K562 (cell line): ENCODE measurements at regions of chr3 and their contacts with region 1.

Region 1: DNA sequence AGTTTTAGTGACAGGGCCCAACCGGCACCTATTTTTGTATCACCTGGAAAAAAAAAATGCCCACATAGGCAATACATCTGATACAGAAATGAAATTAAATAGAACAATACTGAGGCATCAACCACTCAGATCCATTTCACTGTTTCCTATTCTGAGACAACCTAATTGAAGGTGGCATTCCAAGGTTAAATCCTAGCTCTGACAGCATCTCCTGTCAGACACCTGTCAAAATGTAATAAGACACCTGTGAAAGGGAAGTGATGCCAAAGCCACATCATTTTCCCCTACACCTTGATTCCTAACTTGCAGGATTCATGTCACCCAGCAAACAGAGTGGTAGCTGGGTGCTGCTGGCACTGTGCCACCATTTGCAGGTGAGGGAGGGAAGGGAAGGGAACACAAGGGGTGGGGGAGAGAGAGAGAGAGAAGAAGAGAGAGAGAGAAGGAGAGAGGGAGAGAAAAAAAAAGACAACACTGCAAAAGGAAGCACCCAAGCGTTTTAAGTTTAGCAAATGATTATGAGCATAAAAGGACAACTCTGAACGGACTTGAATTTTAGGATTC is 1044.6 kb upstream of the CFAP20DC start:
- DNase-seq: no peak
- ATAC-seq: no peak
- H3K4me3 ChIP-seq: no peak overlapping the region
- H3K27ac ChIP-seq: no peak overlapping the region
- H3K4me1 ChIP-seq: peaks cover 0 to 10% of the 10 kb centered on the region in 2 experiments; a peak in 3 of 5 replicates
- H3K27me3 ChIP-seq: no peaks in the 10 kb centered on the region
- CTCF ChIP-seq: no peak
- EP300 ChIP-seq: no peak
- POLR2A ChIP-seq: no peak
- RAD21 ChIP-seq: no peak

Region 2: DNA sequence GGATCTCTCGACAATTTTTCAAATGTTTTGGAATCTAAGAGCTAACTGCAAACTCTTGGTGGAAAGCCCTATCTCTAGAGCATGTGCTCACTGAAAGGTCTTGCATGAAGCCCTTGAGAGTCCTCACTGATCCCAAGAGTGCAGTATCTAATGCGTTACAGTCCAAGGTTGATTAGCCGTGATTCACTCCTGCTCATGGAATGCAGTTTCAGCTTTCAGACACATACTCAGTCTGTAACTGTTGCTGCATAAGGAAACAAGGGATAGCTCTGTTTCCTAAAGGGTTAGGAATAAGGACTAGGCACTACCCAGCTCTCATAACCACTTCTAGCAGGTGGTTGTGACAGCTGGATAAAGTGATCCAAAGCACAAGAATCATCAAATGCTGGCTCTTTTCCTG is 357.2 kb before region 1 on chr3:
- CTCF ChIA-PET with region 1: no interaction called
- POLR2A ChIA-PET with region 1: no interaction called
- in situ Hi-C with region 1: no loop called
- intact Hi-C with region 1: loop called (anchors 5 kb)
- DNase-seq: no peak
- ATAC-seq: no peak
- H3K4me3 ChIP-seq: no peak overlapping the region
- H3K27ac ChIP-seq: no peak overlapping the region
- H3K4me1 ChIP-seq: no peaks in the 10 kb centered on the region; a peak in 2 of 5 replicates
- H3K27me3 ChIP-seq: no peaks in the 10 kb centered on the region; a peak in 1 of 5 replicates
- CTCF ChIP-seq: no peak
- EP300 ChIP-seq: no peak
- POLR2A ChIP-seq: no peak
- RAD21 ChIP-seq: no peak

Region 3: DNA sequence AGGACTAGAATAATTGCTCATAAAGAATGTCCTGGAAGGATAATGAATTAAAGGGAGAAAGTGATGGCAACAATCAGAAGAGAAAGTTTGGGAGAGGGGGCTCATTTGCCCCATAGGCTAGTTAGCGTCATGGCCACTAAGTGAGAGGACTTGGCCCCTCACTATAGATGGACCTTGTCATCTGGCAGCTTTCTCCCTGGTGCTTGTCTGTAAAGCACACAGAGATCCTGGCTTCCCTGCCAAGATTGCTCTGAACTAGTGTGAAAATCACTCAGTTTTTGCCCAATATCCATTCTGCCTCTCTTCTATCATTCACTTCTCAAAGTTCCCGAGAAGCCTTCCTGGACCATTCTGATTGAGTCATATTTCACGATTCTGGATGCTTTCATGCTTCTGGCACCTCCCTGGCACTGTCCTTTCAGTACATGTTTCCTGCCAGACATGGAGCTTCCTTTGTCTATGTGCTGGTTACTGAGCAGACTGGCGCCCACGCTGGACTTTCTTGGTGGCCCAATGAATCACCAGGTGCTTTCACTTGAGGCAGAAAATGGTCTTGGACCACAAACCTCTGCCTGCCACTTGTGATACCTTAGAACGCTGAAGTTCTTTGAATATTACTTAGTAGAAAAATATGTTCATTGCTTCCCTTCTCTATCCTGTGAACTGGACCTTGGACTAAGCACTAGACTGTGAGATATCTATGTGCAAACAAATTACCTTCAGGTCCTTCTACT is 335.0 kb before region 1 on chr3:
- CTCF ChIA-PET with region 1: no interaction called
- POLR2A ChIA-PET with region 1: interaction called, 3 read pairs
- in situ Hi-C with region 1: loop called (anchors 5 kb)
- intact Hi-C with region 1: no loop called
- DNase-seq: no peak
- ATAC-seq: no peak
- H3K4me3 ChIP-seq: no peak overlapping the region
- H3K27ac ChIP-seq: no peak overlapping the region
- H3K4me1 ChIP-seq: no peaks in the 10 kb centered on the region
- H3K27me3 ChIP-seq: no peaks in the 10 kb centered on the region; a peak in 1 of 5 replicates
- CTCF ChIP-seq: no peak
- EP300 ChIP-seq: no peak
- POLR2A ChIP-seq: no peak
- RAD21 ChIP-seq: no peak

Region 4: DNA sequence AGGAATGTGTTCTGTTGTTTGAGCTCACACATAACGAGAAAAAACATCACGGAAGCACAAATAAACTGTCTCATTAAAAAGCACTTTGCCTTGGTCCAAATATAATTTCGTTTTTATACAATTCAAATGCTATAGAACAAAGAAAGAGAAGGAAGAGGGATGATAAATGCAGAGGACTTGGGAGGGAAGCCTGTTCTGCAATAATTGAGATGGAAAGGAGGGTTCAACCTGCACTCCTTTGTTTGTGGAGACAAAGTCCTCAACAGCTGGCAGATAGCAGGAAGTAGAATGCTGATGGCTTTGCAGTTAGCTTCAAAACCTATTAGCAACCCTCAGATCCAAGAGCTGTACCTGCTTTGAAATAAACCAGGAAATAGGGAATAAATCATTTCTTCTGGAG is 146.0 kb after region 1 on chr3:
- CTCF ChIA-PET with region 1: no interaction called
- POLR2A ChIA-PET with region 1: no interaction called
- in situ Hi-C with region 1: no loop called
- intact Hi-C with region 1: no loop called
- DNase-seq: no peak
- ATAC-seq: no peak
- H3K4me3 ChIP-seq: no peak overlapping the region
- H3K27ac ChIP-seq: no peak overlapping the region
- H3K4me1 ChIP-seq: peaks cover 0 to 9% of the 10 kb centered on the region in 2 experiments; a peak in 3 of 5 replicates
- H3K27me3 ChIP-seq: no peaks in the 10 kb centered on the region
- CTCF ChIP-seq: no peak
- EP300 ChIP-seq: no peak
- POLR2A ChIP-seq: no peak
- RAD21 ChIP-seq: no peak